Sigmoid colon (tissue), 7 donors: ENCODE measurements at regions of chr3 and their contacts with region 1.

Region 1: DNA sequence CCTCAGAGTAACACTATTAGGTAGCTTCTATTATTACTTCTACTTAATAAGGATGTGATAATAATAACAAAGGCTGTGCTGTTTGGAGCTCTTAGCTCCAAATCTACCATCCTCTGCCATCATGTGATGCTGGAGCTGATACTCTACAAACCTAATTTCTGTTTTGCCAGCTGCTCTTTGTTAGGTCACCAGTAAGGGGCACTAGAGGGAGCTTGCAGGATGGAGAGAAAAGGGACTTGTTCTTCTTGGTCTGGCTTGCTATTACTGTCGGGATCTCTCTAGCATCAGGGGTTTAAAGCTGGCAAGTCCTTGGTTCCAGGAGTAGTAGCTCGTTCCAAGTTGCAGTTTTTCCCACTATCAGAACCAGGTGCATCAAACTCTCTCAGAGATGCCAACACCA is 194.9 kb upstream of the KBTBD8 start:
- DNase-seq: no peak
- H3K4me3 ChIP-seq: no peak overlapping the region
- H3K27ac ChIP-seq: no peak overlapping the region
- H3K4me1 ChIP-seq: peaks cover 0 to 15% (median 4%) of the 10 kb centered on the region in 4 donors
- H3K27me3 ChIP-seq: no peaks in the 10 kb centered on the region
- CTCF ChIP-seq: no peak
- EP300 ChIP-seq: no peak
- POLR2A ChIP-seq: no peak

Region 2: GRCh38 chr3:66748175-66748876 is 54.9 kb before region 1 on chr3:
- intact Hi-C with region 1: loop called (anchors 10 kb)
- DNase-seq: no peak
- H3K4me3 ChIP-seq: no peak overlapping the region
- H3K27ac ChIP-seq: peak overlapping the region in 2 of 4 donors; percentile 30 to 37
- H3K4me1 ChIP-seq: peaks cover 0 to 43% (median 23%) of the 10 kb centered on the region in 4 donors
- H3K27me3 ChIP-seq: no peaks in the 10 kb centered on the region
- CTCF ChIP-seq: no peak
- EP300 ChIP-seq: no peak
- POLR2A ChIP-seq: no peak